CD14-positive monocyte (primary cell): ENCODE measurements at regions of chr5 and their contacts with region 1.

Region 1: GRCh38 chr5:61331407-61332357 is at the start of gene ZSWIM6:
- DNase-seq: peak; percentile 99 to 100 (median 99)
- H3K4me3 ChIP-seq: peak within 1 kb of the TSS; percentile 90 to 96 (median 94)
- H3K4me3 Mint-ChIP-seq: peak within 1 kb of the TSS; percentile 94 to 98
- H3K27ac ChIP-seq: peak within 1 kb of the TSS; percentile 87 to 89
- H3K27ac Mint-ChIP-seq: peak within 1 kb of the TSS; percentile 86 to 96 (median 93)
- H3K4me1 ChIP-seq: peaks cover 49 to 58% of the 10 kb centered on the region in 2 donors
- H3K4me1 Mint-ChIP-seq: peaks cover 60% of the 10 kb centered on the region
- H3K27me3 ChIP-seq: no peaks in the 10 kb centered on the region
- H3K27me3 Mint-ChIP-seq: peaks cover 0 to 2% (median 0%) of the 10 kb centered on the region in 3 donors
- CTCF ChIP-seq: no peak
- polyA plus RNA-seq, gene ZSWIM6: 1.7 to 33.5 (median 2.7) TPM

Region 2: DNA sequence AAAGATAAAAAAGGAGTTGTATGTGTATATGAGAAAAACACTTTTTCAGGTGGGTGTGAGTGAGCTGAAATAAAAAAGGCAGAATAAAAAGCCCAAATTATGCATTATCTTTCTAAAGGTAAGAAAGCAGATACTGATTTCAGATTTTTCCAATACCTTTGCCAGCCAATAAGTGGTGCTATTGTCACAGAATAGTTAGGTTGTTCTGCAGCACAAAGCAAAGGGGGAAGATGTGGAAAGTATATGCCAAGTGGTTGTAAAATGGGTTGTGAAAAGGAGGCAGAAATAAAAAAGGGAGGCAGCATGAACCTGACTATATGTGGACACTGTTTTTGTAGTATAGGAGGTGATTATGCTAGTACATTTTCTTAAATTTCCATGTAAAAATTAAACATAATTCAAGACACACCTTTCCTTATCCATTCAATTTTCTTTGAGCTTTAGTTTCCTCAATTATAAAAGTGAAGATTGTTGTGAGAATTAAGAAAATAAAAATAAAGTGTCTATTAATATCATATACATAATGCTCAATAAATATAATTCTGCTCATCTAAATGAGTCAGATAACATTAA is 276.2 kb before region 1 on chr5:
- intact Hi-C with region 1: loop called in 1 of 2 experiments (anchors 10 kb)
- DNase-seq: peak; percentile 28 to 56 (median 46)
- H3K4me3 ChIP-seq: no peak overlapping the region
- H3K4me3 Mint-ChIP-seq: no peak overlapping the region
- H3K27ac ChIP-seq: no peak overlapping the region
- H3K27ac Mint-ChIP-seq: no peak overlapping the region
- H3K4me1 ChIP-seq: no peaks in the 10 kb centered on the region
- H3K4me1 Mint-ChIP-seq: no peaks in the 10 kb centered on the region
- H3K27me3 ChIP-seq: no peaks in the 10 kb centered on the region
- H3K27me3 Mint-ChIP-seq: no peaks in the 10 kb centered on the region
- CTCF ChIP-seq: peak; percentile 87

Region 3: GRCh38 chr5:61162010-61162831 is 169.5 kb before region 1 on chr5 and contains the start of gene SMIM15:
- intact Hi-C with region 1: loop called (anchors 2 to 5 kb)
- DNase-seq: peak; percentile 94 to 95 (median 94)
- H3K4me3 ChIP-seq: peak within 1 kb of the TSS; percentile 59 to 96 (median 86)
- H3K4me3 Mint-ChIP-seq: peak within 1 kb of the TSS; percentile 99
- H3K27ac ChIP-seq: peak within 1 kb of the TSS; percentile 93 to 96
- H3K27ac Mint-ChIP-seq: peak within 1 kb of the TSS; percentile 97 to 99 (median 98)
- H3K4me1 ChIP-seq: peaks cover 27 to 44% of the 10 kb centered on the region in 2 donors
- H3K4me1 Mint-ChIP-seq: peaks cover 52% of the 10 kb centered on the region
- H3K27me3 ChIP-seq: no peaks in the 10 kb centered on the region
- H3K27me3 Mint-ChIP-seq: peaks cover 0 to 2% (median 0%) of the 10 kb centered on the region in 3 donors
- CTCF ChIP-seq: no peak
- polyA plus RNA-seq, gene SMIM15: 7.0 to 43.4 (median 32.0) TPM

Region 4: DNA sequence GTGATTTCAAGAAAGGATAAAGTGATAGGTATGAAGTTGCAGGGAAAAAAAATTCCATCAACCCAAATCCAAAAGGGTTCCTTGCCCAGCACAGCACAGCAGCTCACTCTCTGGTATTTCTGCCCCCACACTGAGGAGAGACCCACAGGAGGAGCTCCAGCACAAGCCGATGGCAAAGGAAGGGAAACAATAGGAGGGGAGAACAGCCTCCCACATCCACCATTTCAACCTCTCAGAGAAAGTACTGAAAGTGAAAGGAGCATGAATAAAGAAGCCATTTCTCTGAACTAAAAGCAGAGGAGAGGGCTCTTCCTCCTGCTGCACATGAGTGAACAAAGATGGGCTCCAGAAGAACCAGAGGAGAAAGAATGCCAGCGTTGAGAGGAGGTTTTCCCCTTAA is 54.5 kb before region 1 on chr5:
- intact Hi-C with region 1: loop called (anchors 5 kb)
- DNase-seq: no peak
- H3K4me3 ChIP-seq: peak overlapping the region in 2 of 3 experiments; percentile 24 to 67
- H3K4me3 Mint-ChIP-seq: peak overlapping the region; percentile 70 to 88
- H3K27ac ChIP-seq: peak overlapping the region; percentile 94 to 95
- H3K27ac Mint-ChIP-seq: no peak overlapping the region
- H3K4me1 ChIP-seq: peaks cover 87 to 94% of the 10 kb centered on the region in 2 donors
- H3K4me1 Mint-ChIP-seq: peaks cover 18% of the 10 kb centered on the region
- H3K27me3 ChIP-seq: no peaks in the 10 kb centered on the region
- H3K27me3 Mint-ChIP-seq: peaks cover 0 to 6% (median 0%) of the 10 kb centered on the region in 3 donors
- CTCF ChIP-seq: no peak

Region 5: GRCh38 chr5:61313960-61314681 is 17.6 kb before region 1 on chr5:
- intact Hi-C with region 1: loop called in 1 of 2 experiments (anchors 2 kb)
- DNase-seq: peak; percentile 69 to 87 (median 85)
- H3K4me3 ChIP-seq: no peak overlapping the region
- H3K4me3 Mint-ChIP-seq: peak overlapping the region in 1 of 2 donors; percentile 62
- H3K27ac ChIP-seq: peak overlapping the region in 1 of 2 donors; percentile 77
- H3K27ac Mint-ChIP-seq: peak overlapping the region; percentile 75 to 93 (median 87)
- H3K4me1 ChIP-seq: peaks cover 36 to 41% of the 10 kb centered on the region in 2 donors
- H3K4me1 Mint-ChIP-seq: peaks cover 49% of the 10 kb centered on the region
- H3K27me3 ChIP-seq: no peaks in the 10 kb centered on the region
- H3K27me3 Mint-ChIP-seq: peaks cover 0 to 3% (median 0%) of the 10 kb centered on the region in 3 donors
- CTCF ChIP-seq: no peak

Region 6: DNA sequence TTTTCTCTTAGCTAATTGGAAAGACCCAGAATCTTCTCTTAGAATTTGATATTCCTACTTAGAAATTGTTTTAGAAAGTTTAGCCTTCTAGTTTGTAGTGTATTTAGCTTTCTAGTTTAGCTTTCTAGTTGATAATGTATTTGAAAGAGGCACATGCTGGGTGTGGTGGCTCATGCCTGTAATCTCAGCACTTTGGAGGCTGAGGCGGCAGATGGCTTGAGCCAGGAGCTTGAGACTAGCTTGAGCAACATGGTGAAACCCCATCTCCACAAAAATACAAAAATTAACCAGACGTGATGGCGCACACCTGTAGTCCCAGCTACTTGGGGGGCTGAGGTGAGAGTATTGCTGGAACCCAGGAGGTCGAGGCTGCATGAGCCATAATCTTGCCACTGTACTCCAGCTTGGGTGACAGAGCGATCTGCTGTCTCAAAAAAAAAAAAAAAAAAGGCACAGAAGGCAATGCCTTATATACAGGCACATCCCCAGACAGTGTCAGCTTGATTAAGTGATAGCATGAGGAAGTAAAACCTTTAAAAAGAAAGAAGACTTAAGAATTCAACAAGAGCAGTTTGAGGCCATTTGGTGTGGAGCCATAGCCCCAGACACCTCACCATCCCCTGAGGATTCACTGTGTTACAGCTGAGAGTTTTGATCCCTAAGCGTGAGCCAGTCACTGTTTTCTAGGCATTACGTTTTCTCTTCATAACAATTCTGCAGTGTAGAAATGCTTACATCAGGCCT is 35.0 kb after region 1 on chr5:
- intact Hi-C with region 1: no loop called
- DNase-seq: no peak
- H3K4me3 ChIP-seq: no peak overlapping the region
- H3K4me3 Mint-ChIP-seq: no peak overlapping the region
- H3K27ac ChIP-seq: peak overlapping the region in 1 of 2 donors; percentile 8
- H3K27ac Mint-ChIP-seq: peak overlapping the region in 5 of 7 donors; percentile 25 to 58 (median 38)
- H3K4me1 ChIP-seq: no peaks in the 10 kb centered on the region
- H3K4me1 Mint-ChIP-seq: peaks cover 10% of the 10 kb centered on the region
- H3K27me3 ChIP-seq: no peaks in the 10 kb centered on the region
- H3K27me3 Mint-ChIP-seq: peaks cover 0 to 1% (median 0%) of the 10 kb centered on the region in 3 donors
- CTCF ChIP-seq: no peak

Region 7: GRCh38 chr5:61394078-61394704 is 62.5 kb after region 1 on chr5:
- intact Hi-C with region 1: no loop called
- DNase-seq: no peak
- H3K4me3 ChIP-seq: no peak overlapping the region
- H3K4me3 Mint-ChIP-seq: no peak overlapping the region
- H3K27ac ChIP-seq: no peak overlapping the region
- H3K27ac Mint-ChIP-seq: peak overlapping the region in 3 of 7 donors; percentile 18 to 70 (median 21)
- H3K4me1 ChIP-seq: no peaks in the 10 kb centered on the region
- H3K4me1 Mint-ChIP-seq: peaks cover 6% of the 10 kb centered on the region
- H3K27me3 ChIP-seq: no peaks in the 10 kb centered on the region
- H3K27me3 Mint-ChIP-seq: peaks cover 0 to 2% (median 0%) of the 10 kb centered on the region in 3 donors
- CTCF ChIP-seq: no peak

Region 8: GRCh38 chr5:61408476-61409168 is 76.9 kb after region 1 on chr5:
- intact Hi-C with region 1: loop called (anchors 5 kb)
- DNase-seq: peak; percentile 99 to 100 (median 100)
- H3K4me3 ChIP-seq: peak overlapping the region; percentile 18 to 70 (median 47)
- H3K4me3 Mint-ChIP-seq: peak overlapping the region; percentile 39 to 72
- H3K27ac ChIP-seq: peak overlapping the region in 1 of 2 donors; percentile 77
- H3K27ac Mint-ChIP-seq: peak overlapping the region; percentile 83 to 92 (median 89)
- H3K4me1 ChIP-seq: peaks cover 18 to 30% of the 10 kb centered on the region in 2 donors
- H3K4me1 Mint-ChIP-seq: peaks cover 28% of the 10 kb centered on the region
- H3K27me3 ChIP-seq: no peaks in the 10 kb centered on the region
- H3K27me3 Mint-ChIP-seq: no peaks in the 10 kb centered on the region
- CTCF ChIP-seq: no peak

Region 9: DNA sequence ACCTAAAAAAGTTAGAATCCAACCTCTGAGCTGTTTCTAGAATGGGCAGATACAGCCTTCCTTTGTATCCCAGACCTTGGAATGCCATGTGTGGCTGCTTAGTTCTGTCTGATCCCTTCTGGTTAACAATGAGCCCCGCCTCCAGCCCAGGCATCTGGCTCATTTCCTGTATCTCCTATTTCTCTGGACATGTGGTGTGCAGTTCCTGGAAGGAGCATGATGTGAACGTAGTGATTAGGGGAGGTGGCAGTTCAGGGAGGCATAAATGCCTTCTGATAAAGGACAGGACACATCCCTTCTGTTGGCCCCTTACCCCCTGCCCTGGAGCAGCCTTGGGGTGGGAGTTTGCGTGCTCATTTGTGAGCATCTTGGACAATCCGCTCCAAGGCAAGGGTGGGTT is 243.4 kb after region 1 on chr5:
- intact Hi-C with region 1: no loop called
- DNase-seq: no peak
- H3K4me3 ChIP-seq: no peak overlapping the region
- H3K4me3 Mint-ChIP-seq: no peak overlapping the region
- H3K27ac ChIP-seq: no peak overlapping the region
- H3K27ac Mint-ChIP-seq: no peak overlapping the region
- H3K4me1 ChIP-seq: no peaks in the 10 kb centered on the region
- H3K4me1 Mint-ChIP-seq: no peaks in the 10 kb centered on the region
- H3K27me3 ChIP-seq: no peaks in the 10 kb centered on the region
- H3K27me3 Mint-ChIP-seq: no peaks in the 10 kb centered on the region
- CTCF ChIP-seq: no peak